CD8-positive, alpha-beta memory T cell (primary cell): ENCODE measurements at regions of chr1 and their contacts with region 1.

Region 1: GRCh38 chr1:169427081-169427641 is at the start of gene CCDC181:
- DNase-seq: peak; percentile 2 to 69 (median 50)
- H3K4me3 ChIP-seq: peak within 1 kb of the TSS; percentile 55
- H3K4me3 Mint-ChIP-seq: peak within 1 kb of the TSS; percentile 44 to 91 (median 89)
- H3K27ac ChIP-seq: no peak within 1 kb of the TSS
- H3K27ac Mint-ChIP-seq: peak within 1 kb of the TSS in 3 of 8 donors; percentile 5 to 71 (median 21)
- H3K4me1 ChIP-seq: peaks cover 10% of the 10 kb centered on the region
- H3K4me1 Mint-ChIP-seq: peaks cover 7 to 11% (median 10%) of the 10 kb centered on the region in 3 donors
- H3K27me3 ChIP-seq: peaks cover 18% of the 10 kb centered on the region
- H3K27me3 Mint-ChIP-seq: peaks cover 51 to 94% of the 10 kb centered on the region in 2 donors
- total RNA-seq, gene CCDC181: 0.24 to 0.26 TPM

Region 2: GRCh38 chr1:169395955-169396354 is 31.2 kb before region 1 on chr1:
- CTCF ChIA-PET with region 1: no interaction called
- POLR2A ChIA-PET with region 1: interaction called, 19 read pairs
- DNase-seq: no peak
- H3K4me3 ChIP-seq: no peak overlapping the region
- H3K4me3 Mint-ChIP-seq: no peak overlapping the region
- H3K27ac ChIP-seq: no peak overlapping the region
- H3K27ac Mint-ChIP-seq: no peak overlapping the region
- H3K4me1 ChIP-seq: no peaks in the 10 kb centered on the region
- H3K4me1 Mint-ChIP-seq: no peaks in the 10 kb centered on the region
- H3K27me3 ChIP-seq: no peaks in the 10 kb centered on the region
- H3K27me3 Mint-ChIP-seq: no peaks in the 10 kb centered on the region